Activated CD4-positive, alpha-beta T cell treated with anti-CD3 and anti-CD28 coated beads, Interleukin-2, amount 10 ng/mL, durations not matched to agents 24 days and 14 days (primary cell): ENCODE measurements at regions of chr10 and their contacts with region 1.

Region 1: DNA sequence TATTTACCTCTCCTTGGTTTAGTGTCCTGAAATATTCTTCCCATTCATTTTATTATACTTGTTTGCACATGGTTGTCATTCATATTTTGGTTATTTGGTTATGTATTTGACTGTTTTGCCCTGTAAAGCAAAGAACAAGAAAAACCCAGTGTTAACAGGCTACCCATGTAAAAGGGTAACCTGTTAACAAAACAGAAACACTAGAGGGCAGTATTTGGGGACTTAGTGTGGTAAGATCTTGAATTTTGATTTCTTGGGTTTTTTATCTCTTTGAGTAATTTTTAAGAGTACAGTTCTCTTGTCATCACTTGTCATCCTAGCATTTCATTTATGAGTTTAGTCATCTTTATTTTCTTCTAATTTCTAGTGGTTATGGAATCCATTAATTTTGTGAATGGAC is 51.3 kb downstream of the POLL start:
- DNase-seq: no peak
- H3K4me3 Mint-ChIP-seq: no peak overlapping the region
- H3K27ac Mint-ChIP-seq: no peak overlapping the region
- H3K4me1 Mint-ChIP-seq: no peaks in the 10 kb centered on the region
- H3K27me3 Mint-ChIP-seq: no peaks in the 10 kb centered on the region

Region 2: GRCh38 chr10:101467286-101467770 is 69.5 kb before region 1 on chr10:
- intact Hi-C with region 1: no loop called
- DNase-seq: peak; percentile 78
- H3K4me3 Mint-ChIP-seq: no peak overlapping the region
- H3K27ac Mint-ChIP-seq: no peak overlapping the region
- H3K4me1 Mint-ChIP-seq: no peaks in the 10 kb centered on the region
- H3K27me3 Mint-ChIP-seq: peaks cover 4% of the 10 kb centered on the region

Region 3: DNA sequence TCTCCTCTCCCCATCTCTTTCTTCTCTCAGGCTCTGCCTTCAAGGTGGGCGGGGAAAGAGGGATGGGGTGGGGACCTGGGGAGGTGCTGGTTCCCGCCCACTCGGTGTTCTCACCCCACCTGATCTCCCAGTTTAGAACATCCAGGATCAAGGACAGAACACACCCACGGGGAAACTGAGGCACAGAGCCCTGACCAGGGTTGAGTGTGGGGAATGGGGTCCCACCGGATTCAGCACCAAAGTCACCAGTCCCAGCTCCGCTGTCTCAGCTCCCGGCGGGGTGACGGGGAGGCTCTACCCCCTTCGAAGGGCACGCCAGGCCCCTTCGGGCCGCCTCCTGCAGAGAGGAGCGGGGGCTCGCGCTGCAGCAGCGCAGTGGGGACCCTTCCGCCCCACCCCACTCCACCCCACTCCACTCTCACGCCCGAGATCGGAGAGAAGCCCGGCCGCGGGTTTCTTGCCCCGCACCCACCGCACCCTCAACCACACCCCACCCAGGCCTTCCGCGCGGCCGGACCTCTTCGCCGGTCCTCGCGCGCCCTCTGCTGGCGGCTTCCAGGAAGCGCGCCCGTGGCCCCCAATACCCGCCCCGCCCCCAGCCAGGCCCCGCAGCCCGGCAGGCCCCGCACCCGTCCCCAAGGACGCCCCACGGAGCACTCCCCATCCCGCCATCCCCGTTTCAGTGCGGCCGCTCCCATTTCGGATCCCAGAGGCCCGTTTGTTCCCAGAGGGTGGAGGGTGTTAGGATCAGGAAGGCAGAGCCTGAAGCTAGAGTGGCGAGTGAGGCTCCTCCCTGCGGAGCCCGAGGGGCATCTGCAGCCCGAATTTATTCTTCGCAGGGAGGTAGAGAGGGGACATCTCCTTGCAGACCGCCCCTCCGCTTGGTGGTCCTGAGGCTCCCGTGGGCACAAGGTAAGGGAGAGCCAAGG is 33.3 kb after region 1 on chr10:
- intact Hi-C with region 1: loop called (anchors 1 kb)
- DNase-seq: peak; percentile 93
- H3K4me3 Mint-ChIP-seq: peak overlapping the region; percentile 79
- H3K27ac Mint-ChIP-seq: peak overlapping the region; percentile 56
- H3K4me1 Mint-ChIP-seq: peaks cover 17% of the 10 kb centered on the region
- H3K27me3 Mint-ChIP-seq: peaks cover 43% of the 10 kb centered on the region